CD14-positive monocyte (primary cell): ENCODE measurements at regions of chr6 and their contacts with region 1.

Region 1: GRCh38 chr6:152552616-152553209 is 84.4 kb downstream of the SYNE1 start:
- DNase-seq: peak; percentile 47 to 65 (median 61)
- H3K4me3 ChIP-seq: no peak overlapping the region
- H3K4me3 Mint-ChIP-seq: no peak overlapping the region
- H3K27ac ChIP-seq: no peak overlapping the region
- H3K27ac Mint-ChIP-seq: no peak overlapping the region
- H3K4me1 ChIP-seq: peaks cover 11% of the 10 kb centered on the region in 2 donors
- H3K4me1 Mint-ChIP-seq: peaks cover 10% of the 10 kb centered on the region
- H3K27me3 ChIP-seq: no peaks in the 10 kb centered on the region
- H3K27me3 Mint-ChIP-seq: peaks cover 0 to 1% (median 0%) of the 10 kb centered on the region in 3 donors
- CTCF ChIP-seq: peak; percentile 92

Region 2: DNA sequence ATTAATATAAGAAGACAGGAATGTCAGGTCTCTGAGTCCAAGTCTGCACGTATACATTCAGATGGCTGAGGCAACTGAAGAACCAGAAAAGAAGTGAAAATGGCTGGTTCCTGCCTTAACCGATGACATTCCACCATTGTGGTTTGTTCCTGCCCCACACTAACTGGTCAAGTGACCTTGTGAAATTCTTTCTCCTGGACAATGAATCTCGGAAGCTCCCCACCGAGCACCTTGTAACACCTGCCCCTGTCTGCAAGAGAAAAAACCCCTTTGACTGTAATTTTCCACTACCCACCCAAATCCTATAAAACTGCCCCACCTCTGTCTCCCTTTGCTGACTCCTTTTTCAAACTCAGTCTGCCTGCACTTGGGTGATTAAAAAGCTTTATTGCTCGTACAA is 56.0 kb before region 1 on chr6:
- intact Hi-C with region 1: no loop called
- DNase-seq: no peak
- H3K4me3 ChIP-seq: no peak overlapping the region
- H3K4me3 Mint-ChIP-seq: no peak overlapping the region
- H3K27ac ChIP-seq: no peak overlapping the region
- H3K27ac Mint-ChIP-seq: no peak overlapping the region
- H3K4me1 ChIP-seq: no peaks in the 10 kb centered on the region
- H3K4me1 Mint-ChIP-seq: no peaks in the 10 kb centered on the region
- H3K27me3 ChIP-seq: no peaks in the 10 kb centered on the region
- H3K27me3 Mint-ChIP-seq: no peaks in the 10 kb centered on the region
- CTCF ChIP-seq: no peak

Region 3: DNA sequence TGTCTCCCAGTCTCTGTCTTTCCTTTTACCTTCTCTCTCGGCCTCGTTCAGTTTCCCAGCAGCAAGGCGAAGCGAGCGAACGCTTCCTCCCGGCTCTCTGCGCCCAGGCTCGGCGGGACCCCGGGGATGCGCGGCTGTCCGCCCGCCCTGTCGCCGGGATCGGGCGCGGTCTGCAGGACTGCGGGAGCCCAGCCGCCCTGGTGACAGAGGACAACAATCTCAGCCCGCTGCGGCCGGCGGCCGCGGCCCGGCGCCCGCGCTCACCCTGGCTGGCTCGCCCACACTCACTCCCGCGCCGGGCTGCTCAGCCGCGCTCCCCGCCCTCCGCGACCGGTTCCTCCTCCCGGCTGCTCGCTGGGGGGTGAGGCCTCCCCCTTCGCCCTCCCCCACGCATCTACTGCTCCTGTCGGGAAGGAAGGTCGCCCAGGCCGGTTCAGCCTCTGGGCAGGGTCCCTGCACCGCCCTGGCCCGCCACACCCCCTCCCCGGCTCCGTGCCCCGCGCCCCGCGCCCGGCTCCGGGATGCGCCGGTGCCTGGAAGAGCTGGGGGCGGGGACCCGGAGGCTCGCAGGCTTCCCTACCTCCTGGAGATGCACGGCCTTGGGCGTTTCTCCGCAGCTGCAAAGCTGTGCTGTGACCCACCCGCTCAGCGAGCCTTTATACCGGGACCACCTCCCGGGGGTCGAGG is 84.0 kb after region 1 on chr6:
- intact Hi-C with region 1: loop called in 1 of 2 experiments (anchors 10 kb)
- DNase-seq: peak in 2 of 3 donors; percentile 17 to 23
- H3K4me3 ChIP-seq: peak overlapping the region; percentile 56 to 90 (median 60)
- H3K4me3 Mint-ChIP-seq: peak overlapping the region; percentile 96 to 99
- H3K27ac ChIP-seq: peak overlapping the region in 1 of 2 donors; percentile 68
- H3K27ac Mint-ChIP-seq: peak overlapping the region in 4 of 7 donors; percentile 30 to 85 (median 70)
- H3K4me1 ChIP-seq: peaks cover 34 to 53% of the 10 kb centered on the region in 2 donors
- H3K4me1 Mint-ChIP-seq: peaks cover 58% of the 10 kb centered on the region
- H3K27me3 ChIP-seq: peaks cover 12 to 26% of the 10 kb centered on the region in 2 donors
- H3K27me3 Mint-ChIP-seq: peaks cover 30 to 42% (median 30%) of the 10 kb centered on the region in 3 donors
- CTCF ChIP-seq: no peak

Region 4: GRCh38 chr6:152948150-152948768 is 395.5 kb after region 1 on chr6:
- intact Hi-C with region 1: loop called (anchors 5 to 10 kb)
- DNase-seq: peak; percentile 3 to 34 (median 15)
- H3K4me3 ChIP-seq: no peak overlapping the region
- H3K4me3 Mint-ChIP-seq: peak overlapping the region; percentile 54 to 83
- H3K27ac ChIP-seq: no peak overlapping the region
- H3K27ac Mint-ChIP-seq: no peak overlapping the region
- H3K4me1 ChIP-seq: no peaks in the 10 kb centered on the region
- H3K4me1 Mint-ChIP-seq: peaks cover 6% of the 10 kb centered on the region
- H3K27me3 ChIP-seq: no peaks in the 10 kb centered on the region
- H3K27me3 Mint-ChIP-seq: peaks cover 2 to 3% (median 3%) of the 10 kb centered on the region in 3 donors
- CTCF ChIP-seq: peak; percentile 74